ENCODE measurements at regions of chr14 and their contacts with region 1.

Region 1: DNA sequence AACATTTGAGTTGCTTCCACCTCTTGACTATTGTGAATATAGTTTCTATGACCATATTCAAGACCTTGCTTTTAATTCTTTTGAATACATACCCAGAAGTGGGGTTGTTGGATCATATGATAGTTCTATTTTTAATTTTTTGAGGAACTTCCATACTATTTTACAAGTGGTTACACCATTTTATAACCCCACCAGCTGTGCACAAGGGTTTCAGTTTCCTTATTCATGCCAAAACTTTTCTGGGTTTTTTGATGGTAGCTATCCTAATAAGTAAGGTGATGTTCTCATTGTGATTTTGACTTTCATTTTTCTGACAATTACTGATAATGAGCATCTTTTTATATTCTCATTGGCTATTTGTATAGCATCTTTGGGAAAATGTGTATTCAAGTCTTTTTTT is 109.4 kb upstream of the GARIN2 start:
- DNase-seq: no peak
- H3K4me3 ChIP-seq: no peak overlapping the region
- H3K27ac ChIP-seq: no peak overlapping the region
- H3K4me1 ChIP-seq: no peaks in the 10 kb centered on the region
- H3K27me3 ChIP-seq: no peaks in the 10 kb centered on the region
- CTCF ChIP-seq: no peak
- POLR2A ChIP-seq: no peak

Region 2: GRCh38 chr14:65153101-65153500 is 1926.7 kb before region 1 on chr14:
- intact Hi-C with region 1: no loop called
- DNase-seq: no peak
- H3K4me3 ChIP-seq: no peak overlapping the region
- H3K27ac ChIP-seq: no peak overlapping the region
- H3K4me1 ChIP-seq: peaks cover 0 to 3% of the 10 kb centered on the region in 2 donors
- H3K27me3 ChIP-seq: no peaks in the 10 kb centered on the region
- CTCF ChIP-seq: no peak
- POLR2A ChIP-seq: no peak

Region 3: GRCh38 chr14:66563731-66564130 is 516.1 kb before region 1 on chr14:
- intact Hi-C with region 1: loop called (anchors 5 kb)
- DNase-seq: no peak
- H3K4me3 ChIP-seq: no peak overlapping the region
- H3K27ac ChIP-seq: no peak overlapping the region
- H3K4me1 ChIP-seq: no peaks in the 10 kb centered on the region
- H3K27me3 ChIP-seq: no peaks in the 10 kb centered on the region
- CTCF ChIP-seq: no peak
- POLR2A ChIP-seq: no peak